Activated B cell treated with CpG ODN at 0.5 μM for 24 hours (primary cell): ENCODE measurements at regions of chr3 and their contacts with region 1.

Region 1: GRCh38 chr3:136075218-136075808 is 109.8 kb downstream of the PPP2R3A start:
- DNase-seq: peak; percentile 36
- ATAC-seq: peak; percentile 54
- H3K4me3 Mint-ChIP-seq: no peak overlapping the region
- H3K27ac Mint-ChIP-seq: no peak overlapping the region
- H3K4me1 Mint-ChIP-seq: peaks cover 2% of the 10 kb centered on the region
- H3K27me3 Mint-ChIP-seq: peaks cover 3% of the 10 kb centered on the region
- CTCF ChIP-seq: peak; percentile 98

Region 2: GRCh38 chr3:136250226-136250902 is 175.1 kb after region 1 on chr3 and contains the start of gene PCCB:
- CTCF ChIA-PET with region 1: interaction called, 14 read pairs
- POLR2A ChIA-PET with region 1: no interaction called
- intact Hi-C with region 1: loop called (anchors 1 kb)
- DNase-seq: peak; percentile 88
- ATAC-seq: peak; percentile 96
- H3K4me3 Mint-ChIP-seq: peak within 1 kb of the TSS; percentile 92
- H3K27ac Mint-ChIP-seq: peak within 1 kb of the TSS; percentile 95
- H3K4me1 Mint-ChIP-seq: peaks cover 23% of the 10 kb centered on the region
- H3K27me3 Mint-ChIP-seq: no peaks in the 10 kb centered on the region
- CTCF ChIP-seq: no peak
- total RNA-seq, gene PCCB: 31.2 and 31.8 TPM in 2 replicates

Region 3: DNA sequence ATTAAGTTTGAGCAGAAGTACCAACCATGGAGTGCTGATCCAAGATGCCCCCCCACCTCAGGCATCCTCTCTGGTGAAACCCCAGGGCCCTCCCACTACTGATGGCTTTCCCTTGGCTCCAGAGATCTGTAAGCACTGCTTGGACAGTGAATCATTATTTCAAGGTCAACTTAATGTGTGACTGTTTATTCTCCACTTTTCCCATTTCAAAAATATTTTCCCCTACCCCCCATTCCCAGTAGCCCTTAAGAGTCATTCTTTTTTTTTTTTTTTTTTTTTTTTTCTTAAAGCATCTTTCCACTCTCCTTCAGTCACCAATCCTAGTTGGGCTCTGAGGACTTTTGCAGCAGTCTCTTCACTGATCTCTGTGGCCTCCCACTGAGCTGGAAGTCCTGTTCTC is 257.5 kb after region 1 on chr3:
- CTCF ChIA-PET with region 1: interaction called, 3 read pairs
- POLR2A ChIA-PET with region 1: no interaction called
- intact Hi-C with region 1: loop called (anchors 5 kb)
- DNase-seq: no peak
- ATAC-seq: no peak
- H3K4me3 Mint-ChIP-seq: no peak overlapping the region
- H3K27ac Mint-ChIP-seq: no peak overlapping the region
- H3K4me1 Mint-ChIP-seq: no peaks in the 10 kb centered on the region
- H3K27me3 Mint-ChIP-seq: no peaks in the 10 kb centered on the region
- CTCF ChIP-seq: no peak

Region 4: GRCh38 chr3:136390574-136390973 is 315.3 kb after region 1 on chr3:
- CTCF ChIA-PET with region 1: interaction called, 19 read pairs
- POLR2A ChIA-PET with region 1: no interaction called
- intact Hi-C with region 1: loop called (anchors 1 kb)
- DNase-seq: no peak
- ATAC-seq: no peak
- H3K4me3 Mint-ChIP-seq: no peak overlapping the region
- H3K27ac Mint-ChIP-seq: no peak overlapping the region
- H3K4me1 Mint-ChIP-seq: peaks cover 3% of the 10 kb centered on the region
- H3K27me3 Mint-ChIP-seq: no peaks in the 10 kb centered on the region
- CTCF ChIP-seq: no peak

Region 5: DNA sequence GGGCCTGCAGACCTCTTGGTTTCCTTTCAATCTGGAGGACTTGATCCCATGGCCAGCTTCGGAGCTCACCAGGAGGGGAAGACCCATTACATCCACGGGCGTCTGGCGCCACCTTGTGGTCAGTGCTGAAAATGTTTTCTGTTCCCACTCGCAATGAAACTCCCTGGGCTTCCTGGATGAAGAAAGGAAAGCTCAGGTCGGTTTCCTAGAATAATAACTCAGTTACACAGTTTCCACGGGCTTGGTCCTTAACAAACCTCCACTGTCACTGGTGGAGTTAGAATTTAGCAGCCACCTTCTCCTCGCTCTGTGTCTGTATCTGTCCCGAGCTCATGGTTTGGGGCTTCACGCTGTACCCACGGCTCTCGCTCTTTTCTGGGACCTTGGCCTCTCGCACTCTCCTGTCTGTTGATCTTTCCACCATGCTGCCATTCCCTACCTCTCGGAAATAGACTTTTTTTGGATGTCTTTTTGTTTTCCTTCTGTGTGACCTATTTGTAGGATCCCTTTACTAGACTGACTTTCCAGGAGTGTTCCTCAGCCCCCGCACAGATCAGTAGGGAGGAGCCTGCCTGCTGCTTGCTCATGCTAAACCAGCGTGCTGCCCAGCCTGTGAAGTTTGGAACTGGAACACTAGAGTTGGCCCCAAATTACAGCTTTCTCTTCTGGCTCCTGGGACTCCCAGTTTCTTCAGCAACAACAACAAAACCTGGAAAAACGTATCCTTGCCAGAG is 938.8 kb after region 1 on chr3:
- CTCF ChIA-PET with region 1: interaction called, 48 read pairs
- POLR2A ChIA-PET with region 1: interaction called, 3 read pairs
- intact Hi-C with region 1: loop called (anchors 1 kb)
- DNase-seq: peak; percentile 76
- ATAC-seq: peak; percentile 88
- H3K4me3 Mint-ChIP-seq: peak overlapping the region; percentile 65
- H3K27ac Mint-ChIP-seq: no peak overlapping the region
- H3K4me1 Mint-ChIP-seq: peaks cover 8% of the 10 kb centered on the region
- H3K27me3 Mint-ChIP-seq: no peaks in the 10 kb centered on the region
- CTCF ChIP-seq: no peak

Region 6: GRCh38 chr3:137105277-137105977 is 1030.1 kb after region 1 on chr3:
- CTCF ChIA-PET with region 1: no interaction called
- POLR2A ChIA-PET with region 1: no interaction called
- intact Hi-C with region 1: loop called (anchors 1 kb)
- DNase-seq: no peak
- ATAC-seq: no peak
- H3K4me3 Mint-ChIP-seq: no peak overlapping the region
- H3K27ac Mint-ChIP-seq: no peak overlapping the region
- H3K4me1 Mint-ChIP-seq: no peaks in the 10 kb centered on the region
- H3K27me3 Mint-ChIP-seq: peaks cover 4% of the 10 kb centered on the region
- CTCF ChIP-seq: peak; percentile 31

Region 7: DNA sequence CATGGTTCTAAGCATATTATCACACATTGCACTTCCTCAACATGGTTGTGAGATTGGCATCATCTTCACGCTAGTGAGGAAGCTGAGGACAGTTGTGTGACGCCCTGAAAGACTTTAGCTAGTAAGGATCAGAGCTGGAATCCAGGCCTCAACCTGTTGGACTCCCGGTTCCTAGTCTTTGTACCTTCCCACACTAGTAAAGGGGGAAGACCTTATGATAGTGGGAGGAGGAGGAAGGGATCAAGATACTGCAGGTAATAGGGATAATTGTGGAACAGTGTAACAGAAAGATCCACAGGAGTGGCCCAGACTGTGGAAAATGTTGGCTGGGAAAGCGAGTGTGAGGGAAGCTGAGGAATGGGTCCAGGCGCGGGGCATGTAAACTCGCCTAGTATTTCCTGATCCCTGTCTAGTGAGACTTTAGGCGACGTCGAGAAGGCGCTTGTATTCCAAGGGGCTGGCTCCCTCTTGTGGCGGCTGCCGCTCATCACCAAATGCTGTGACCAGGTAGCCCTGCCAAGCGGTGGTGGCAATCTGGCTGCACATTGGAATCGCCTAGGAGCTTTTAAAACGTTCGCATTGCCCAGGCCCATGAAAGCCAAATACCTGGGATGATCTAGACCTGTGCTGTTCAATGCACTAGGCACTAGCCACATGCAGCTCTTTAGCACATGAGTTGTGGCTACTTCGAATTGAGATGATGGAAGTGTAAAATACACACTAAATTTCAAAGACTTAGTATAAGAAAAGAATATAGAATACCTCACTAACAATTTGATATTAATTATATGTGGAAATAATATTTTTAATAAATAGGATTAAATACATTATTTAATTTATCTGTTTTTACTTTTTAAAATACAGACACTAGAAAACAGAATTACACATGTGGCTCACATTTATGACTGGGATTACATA is 1895.9 kb after region 1 on chr3:
- CTCF ChIA-PET with region 1: no interaction called
- POLR2A ChIA-PET with region 1: no interaction called
- intact Hi-C with region 1: loop called (anchors 1 kb)
- DNase-seq: no peak
- ATAC-seq: no peak
- H3K4me3 Mint-ChIP-seq: no peak overlapping the region
- H3K27ac Mint-ChIP-seq: no peak overlapping the region
- H3K4me1 Mint-ChIP-seq: no peaks in the 10 kb centered on the region
- H3K27me3 Mint-ChIP-seq: peaks cover 7% of the 10 kb centered on the region
- CTCF ChIP-seq: no peak